CD4-positive, alpha-beta T cell (primary cell): ENCODE measurements at regions of chr5 and their contacts with region 1.

Region 1: DNA sequence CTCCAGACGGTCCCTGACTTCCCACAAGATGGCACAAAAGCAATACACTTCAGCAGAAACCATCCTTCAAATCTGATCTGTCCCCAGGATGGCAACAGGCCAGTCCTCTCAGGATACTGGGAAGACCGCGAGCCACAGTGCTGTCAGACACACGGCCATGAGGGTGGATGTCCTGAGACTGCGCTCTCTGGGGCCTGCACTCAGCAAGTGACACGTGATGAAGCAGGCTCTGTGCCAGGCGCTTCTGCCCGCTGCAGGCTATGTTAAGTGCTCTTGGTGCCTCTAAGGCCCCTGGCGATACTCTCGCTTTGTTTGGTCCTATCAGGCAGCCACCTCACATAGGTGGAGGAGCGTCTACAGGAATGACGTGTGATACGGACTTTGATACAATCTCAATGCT is 7.1 kb downstream of the BRD9 start:
- DNase-seq: no peak
- ATAC-seq: no peak
- H3K4me3 ChIP-seq: no peak overlapping the region
- H3K4me3 Mint-ChIP-seq: no peak overlapping the region
- H3K27ac ChIP-seq: no peak overlapping the region
- H3K27ac Mint-ChIP-seq: no peak overlapping the region
- H3K4me1 ChIP-seq: peaks cover 31% of the 10 kb centered on the region
- H3K4me1 Mint-ChIP-seq: peaks cover 42% of the 10 kb centered on the region
- H3K27me3 ChIP-seq: no peaks in the 10 kb centered on the region
- H3K27me3 Mint-ChIP-seq: no peaks in the 10 kb centered on the region
- CTCF ChIP-seq: no peak

Region 2: DNA sequence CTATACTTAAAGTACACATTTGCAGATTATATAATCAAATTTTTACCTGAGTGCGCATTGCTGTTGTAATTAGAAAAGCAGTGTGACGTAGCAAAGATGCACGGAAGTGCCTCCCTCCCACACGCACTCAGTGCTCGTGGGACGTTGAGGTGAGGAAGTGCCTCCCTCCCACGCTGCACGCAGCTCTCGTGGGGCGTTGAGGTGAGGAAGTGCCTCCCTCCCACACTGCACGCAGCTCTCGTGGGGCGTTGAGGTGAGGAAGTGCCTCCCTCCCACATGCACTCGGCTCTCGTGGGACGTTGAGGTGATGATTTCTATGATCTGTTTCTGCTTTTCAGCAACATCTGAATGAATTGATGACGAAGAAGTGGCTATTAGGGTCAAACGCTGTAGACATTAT is 421.6 kb before region 1 on chr5:
- CTCF ChIA-PET with region 1: no interaction called
- POLR2A ChIA-PET with region 1: no interaction called
- intact Hi-C with region 1: loop called in 1 of 2 experiments (anchors 5 kb)
- DNase-seq: peak; percentile 57 to 97 (median 74)
- ATAC-seq: peak; percentile 99
- H3K4me3 ChIP-seq: no peak overlapping the region
- H3K4me3 Mint-ChIP-seq: peak overlapping the region; percentile 69
- H3K27ac ChIP-seq: peak overlapping the region; percentile 55 to 65
- H3K27ac Mint-ChIP-seq: peak overlapping the region; percentile 94
- H3K4me1 ChIP-seq: peaks cover 16% of the 10 kb centered on the region
- H3K4me1 Mint-ChIP-seq: peaks cover 11% of the 10 kb centered on the region
- H3K27me3 ChIP-seq: no peaks in the 10 kb centered on the region
- H3K27me3 Mint-ChIP-seq: no peaks in the 10 kb centered on the region
- CTCF ChIP-seq: no peak

Region 3: GRCh38 chr5:902129-902916 is 16.8 kb after region 1 on chr5:
- CTCF ChIA-PET with region 1: no interaction called
- POLR2A ChIA-PET with region 1: no interaction called
- intact Hi-C with region 1: no loop called
- DNase-seq: no peak
- ATAC-seq: no peak
- H3K4me3 ChIP-seq: no peak overlapping the region
- H3K4me3 Mint-ChIP-seq: no peak overlapping the region
- H3K27ac ChIP-seq: no peak overlapping the region
- H3K27ac Mint-ChIP-seq: no peak overlapping the region
- H3K4me1 ChIP-seq: no peaks in the 10 kb centered on the region
- H3K4me1 Mint-ChIP-seq: no peaks in the 10 kb centered on the region
- H3K27me3 ChIP-seq: no peaks in the 10 kb centered on the region
- H3K27me3 Mint-ChIP-seq: no peaks in the 10 kb centered on the region
- CTCF ChIP-seq: no peak

Region 4: GRCh38 chr5:932628-933250 is 47.2 kb after region 1 on chr5:
- CTCF ChIA-PET with region 1: no interaction called
- POLR2A ChIA-PET with region 1: no interaction called
- intact Hi-C with region 1: no loop called
- DNase-seq: no peak
- ATAC-seq: no peak
- H3K4me3 ChIP-seq: no peak overlapping the region
- H3K4me3 Mint-ChIP-seq: no peak overlapping the region
- H3K27ac ChIP-seq: no peak overlapping the region
- H3K27ac Mint-ChIP-seq: no peak overlapping the region
- H3K4me1 ChIP-seq: no peaks in the 10 kb centered on the region
- H3K4me1 Mint-ChIP-seq: no peaks in the 10 kb centered on the region
- H3K27me3 ChIP-seq: peaks cover under 1 to 2% of the 10 kb centered on the region in 2 experiments
- H3K27me3 Mint-ChIP-seq: peaks cover 23% of the 10 kb centered on the region
- CTCF ChIP-seq: no peak